HepG2 (cell line): ENCODE measurements at regions of chr3 and their contacts with region 1.

Region 1: GRCh38 chr3:156382458-156383346 is 172.2 kb downstream of the SSR3 start:
- DNase-seq: peak; percentile 24
- ATAC-seq: peak; percentile 96
- H3K4me3 ChIP-seq: no peak overlapping the region
- H3K27ac ChIP-seq: no peak overlapping the region
- H3K4me1 ChIP-seq: no peaks in the 10 kb centered on the region
- H3K27me3 ChIP-seq: 0 out of 5 replicates have a peak, but pooled peaks cover 0 to 3% of the 10 kb centered on the region in 2 experiments
- CTCF ChIP-seq: peak; percentile 77
- EP300 ChIP-seq: no peak
- POLR2A ChIP-seq: no peak
- RAD21 ChIP-seq: peak; percentile 70

Region 2: DNA sequence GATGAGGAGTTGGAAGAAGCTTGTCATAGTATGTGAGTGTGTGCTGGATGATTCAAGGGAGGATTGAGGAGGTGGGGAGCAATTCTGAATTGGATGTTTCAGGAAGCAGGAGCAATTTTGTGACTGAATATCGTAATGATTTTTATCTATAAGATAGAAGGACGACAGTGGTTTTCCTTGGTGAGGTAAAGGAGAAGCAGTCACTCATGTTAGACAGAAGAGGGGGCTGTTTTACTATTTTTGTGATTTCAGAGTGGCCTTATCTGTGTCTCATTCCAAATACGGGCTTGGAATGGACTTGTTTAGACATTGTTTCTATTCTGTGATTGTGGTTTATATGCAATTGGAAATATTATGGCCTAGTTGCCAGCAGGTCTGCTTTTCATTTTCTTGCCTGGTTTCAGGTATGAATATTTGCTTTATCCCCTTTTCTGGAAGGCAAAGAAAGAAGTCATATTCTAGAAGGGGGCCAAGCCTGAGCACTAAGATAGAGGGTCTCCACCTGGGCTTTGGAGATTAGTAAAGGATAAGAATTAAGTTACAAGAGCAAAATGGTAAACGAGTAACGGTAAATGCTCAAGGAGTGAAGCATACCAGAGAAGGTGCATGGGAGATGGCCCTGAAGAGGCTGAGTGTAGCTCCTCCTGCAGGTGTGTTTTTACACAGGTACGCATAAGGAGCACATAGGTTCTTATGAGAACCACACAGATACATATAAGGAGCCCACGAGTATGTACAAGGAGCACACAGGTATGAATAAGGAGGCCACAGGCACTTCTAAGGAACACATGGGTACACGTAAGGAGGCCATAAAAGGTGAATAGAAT is 387.0 kb before region 1 on chr3:
- CTCF ChIA-PET with region 1: interaction called, 12 read pairs
- POLR2A ChIA-PET with region 1: no interaction called
- in situ Hi-C with region 1: no loop called
- intact Hi-C with region 1: loop called (anchors 1 kb)
- DNase-seq: peak; percentile 41
- ATAC-seq: peak; percentile 95
- H3K4me3 ChIP-seq: no peak overlapping the region
- H3K27ac ChIP-seq: no peak overlapping the region
- H3K4me1 ChIP-seq: no peaks in the 10 kb centered on the region
- H3K27me3 ChIP-seq: no peaks in the 10 kb centered on the region
- CTCF ChIP-seq: peak; percentile 72
- EP300 ChIP-seq: no peak
- POLR2A ChIP-seq: no peak
- RAD21 ChIP-seq: peak; percentile 62

Region 3: GRCh38 chr3:156260331-156260730 is 122.4 kb before region 1 on chr3:
- CTCF ChIA-PET with region 1: no interaction called
- POLR2A ChIA-PET with region 1: no interaction called
- in situ Hi-C with region 1: no loop called
- intact Hi-C with region 1: no loop called
- DNase-seq: no peak
- ATAC-seq: no peak
- H3K4me3 ChIP-seq: no peak overlapping the region
- H3K27ac ChIP-seq: no peak overlapping the region
- H3K4me1 ChIP-seq: no peaks in the 10 kb centered on the region
- H3K27me3 ChIP-seq: no peaks in the 10 kb centered on the region
- CTCF ChIP-seq: no peak
- EP300 ChIP-seq: no peak
- POLR2A ChIP-seq: no peak
- RAD21 ChIP-seq: no peak

Region 4: GRCh38 chr3:156509189-156510174 is 126.8 kb after region 1 on chr3:
- CTCF ChIA-PET with region 1: no interaction called
- POLR2A ChIA-PET with region 1: no interaction called
- in situ Hi-C with region 1: no loop called
- intact Hi-C with region 1: loop called (anchors 5 kb)
- DNase-seq: peak; percentile 18
- ATAC-seq: peak; percentile 71
- H3K4me3 ChIP-seq: no peak overlapping the region
- H3K27ac ChIP-seq: no peak overlapping the region
- H3K4me1 ChIP-seq: peaks cover 11% of the 10 kb centered on the region
- H3K27me3 ChIP-seq: no peaks in the 10 kb centered on the region
- CTCF ChIP-seq: peak; percentile 63
- EP300 ChIP-seq: no peak
- POLR2A ChIP-seq: no peak
- RAD21 ChIP-seq: no peak

Region 5: GRCh38 chr3:157081681-157082210 is 699.0 kb after region 1 on chr3:
- CTCF ChIA-PET with region 1: no interaction called
- POLR2A ChIA-PET with region 1: no interaction called
- in situ Hi-C with region 1: no loop called
- intact Hi-C with region 1: loop called (anchors 5 kb)
- DNase-seq: peak; percentile 68
- ATAC-seq: peak; percentile 83
- H3K4me3 ChIP-seq: peak overlapping the region in 1 of 3 experiments; percentile 36; a peak in 1 of 6 replicates
- H3K27ac ChIP-seq: no peak overlapping the region
- H3K4me1 ChIP-seq: peaks cover 27% of the 10 kb centered on the region
- H3K27me3 ChIP-seq: no peaks in the 10 kb centered on the region
- CTCF ChIP-seq: peak; percentile 97
- EP300 ChIP-seq: no peak; a peak in 1 of 4 replicates
- POLR2A ChIP-seq: no peak
- RAD21 ChIP-seq: peak; percentile 96